Ascending aorta (tissue), 2 donors: ENCODE measurements at regions of chr13 and their contacts with region 1.

Region 1: GRCh38 chr13:22114630-22115311 is 443.9 kb downstream of the FGF9 start:
- DNase-seq: no peak
- H3K4me3 ChIP-seq: no peak overlapping the region
- H3K27ac ChIP-seq: peak overlapping the region; percentile 46 to 63
- H3K4me1 ChIP-seq: peaks cover 3 to 23% of the 10 kb centered on the region in 2 donors
- H3K27me3 ChIP-seq: no peaks in the 10 kb centered on the region
- CTCF ChIP-seq: no peak

Region 2: DNA sequence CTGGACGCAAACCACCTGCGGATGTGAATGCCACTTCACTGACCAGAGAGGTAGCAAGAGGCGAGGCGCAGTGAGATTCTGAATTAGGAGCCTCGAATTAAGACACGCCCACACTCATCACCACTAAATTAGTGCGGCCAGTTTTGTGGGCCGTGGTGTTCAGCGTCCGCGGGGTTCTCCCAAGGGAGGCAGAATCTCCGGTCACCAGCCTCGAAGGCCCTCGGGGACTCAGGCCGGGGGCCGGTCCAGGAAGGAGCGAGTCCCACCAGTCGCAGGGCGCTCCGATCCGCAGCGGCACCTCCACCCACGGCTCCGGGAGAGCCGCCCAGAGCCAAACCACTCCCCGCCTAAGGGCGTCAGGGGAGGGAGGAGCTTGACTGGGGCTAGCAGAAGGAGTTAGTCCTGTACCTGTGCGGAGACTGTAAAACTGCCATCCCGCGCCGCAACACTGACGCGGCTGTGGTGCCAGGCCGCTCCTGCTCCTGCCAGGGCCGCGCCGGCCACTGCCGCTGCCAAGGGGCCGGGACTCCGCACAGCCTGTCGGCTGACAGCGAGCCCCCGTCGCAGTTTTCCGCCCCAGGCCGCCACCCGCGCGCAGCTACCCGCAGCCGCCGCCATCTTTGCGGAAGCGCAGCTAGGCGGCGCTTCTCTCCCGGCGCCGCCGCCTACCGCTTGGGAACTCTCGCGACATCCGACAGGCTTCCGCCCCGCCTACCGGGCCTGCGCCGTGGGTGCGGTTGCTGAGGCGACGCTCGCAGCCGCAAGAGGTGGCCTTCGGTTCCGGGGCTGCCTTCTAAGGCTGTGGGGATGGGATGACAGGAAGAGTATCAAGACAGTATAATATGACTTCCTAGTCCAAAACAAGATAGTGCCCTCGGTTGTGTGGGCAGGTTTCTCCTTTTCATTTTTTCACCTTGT is 511.0 kb before region 1 on chr13 and contains the start of gene MICU2:
- intact Hi-C with region 1: loop called (anchors 10 kb)
- DNase-seq: peak; percentile 71 to 95
- H3K4me3 ChIP-seq: peak within 1 kb of the TSS; percentile 73 to 74
- H3K27ac ChIP-seq: peak within 1 kb of the TSS; percentile 79 to 94
- H3K4me1 ChIP-seq: peaks cover 0 to 5% of the 10 kb centered on the region in 2 donors
- H3K27me3 ChIP-seq: no peaks in the 10 kb centered on the region
- CTCF ChIP-seq: peak in 1 of 3 experiments; percentile 37
- total RNA-seq, gene MICU2: 41.5 TPM

Region 3: DNA sequence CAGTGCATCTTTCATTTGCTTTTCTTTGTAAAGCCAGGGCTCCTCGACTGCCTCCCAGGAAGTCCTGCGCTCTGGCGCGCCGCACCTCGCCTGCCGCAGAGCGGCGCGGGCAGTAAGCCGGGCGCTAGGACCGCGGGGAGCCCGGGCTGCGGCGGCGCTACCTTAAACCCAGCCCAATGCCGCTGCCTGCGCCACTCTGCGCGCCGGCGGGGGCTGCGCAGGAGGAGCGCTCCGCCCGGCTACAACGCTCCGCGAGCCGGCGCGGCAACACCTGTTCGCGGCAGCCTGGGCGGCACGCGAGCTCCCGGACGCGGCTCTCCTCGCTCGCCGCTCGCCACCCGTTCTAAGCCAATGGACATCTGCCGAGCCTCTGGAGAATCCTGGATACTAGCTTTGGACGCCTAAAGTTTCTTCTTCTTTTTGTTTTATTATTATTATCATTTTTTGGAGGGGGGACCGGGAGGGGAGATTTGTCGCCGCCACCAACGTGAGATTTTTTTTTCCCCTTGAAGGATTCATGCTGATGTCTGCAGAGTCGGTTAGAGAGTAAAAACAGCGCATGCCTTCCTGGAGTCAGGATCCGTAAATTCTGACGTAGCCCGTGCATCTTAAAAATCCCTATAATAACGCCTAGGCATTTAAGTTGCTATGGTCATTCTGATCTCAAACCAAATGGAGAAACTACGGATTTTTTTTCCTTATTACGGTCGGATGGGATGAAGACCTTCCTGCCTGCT is 443.7 kb before region 1 on chr13 and contains the start of gene FGF9:
- intact Hi-C with region 1: loop called (anchors 5 kb)
- DNase-seq: peak in 1 of 2 donors; percentile 84
- H3K4me3 ChIP-seq: peak within 1 kb of the TSS; percentile 67 to 83
- H3K27ac ChIP-seq: peak within 1 kb of the TSS in 1 of 2 donors; percentile 39
- H3K4me1 ChIP-seq: peaks cover 12 to 41% of the 10 kb centered on the region in 2 donors
- H3K27me3 ChIP-seq: peaks cover 5% of the 10 kb centered on the region
- CTCF ChIP-seq: no peak
- total RNA-seq, gene FGF9: not detected

Region 4: DNA sequence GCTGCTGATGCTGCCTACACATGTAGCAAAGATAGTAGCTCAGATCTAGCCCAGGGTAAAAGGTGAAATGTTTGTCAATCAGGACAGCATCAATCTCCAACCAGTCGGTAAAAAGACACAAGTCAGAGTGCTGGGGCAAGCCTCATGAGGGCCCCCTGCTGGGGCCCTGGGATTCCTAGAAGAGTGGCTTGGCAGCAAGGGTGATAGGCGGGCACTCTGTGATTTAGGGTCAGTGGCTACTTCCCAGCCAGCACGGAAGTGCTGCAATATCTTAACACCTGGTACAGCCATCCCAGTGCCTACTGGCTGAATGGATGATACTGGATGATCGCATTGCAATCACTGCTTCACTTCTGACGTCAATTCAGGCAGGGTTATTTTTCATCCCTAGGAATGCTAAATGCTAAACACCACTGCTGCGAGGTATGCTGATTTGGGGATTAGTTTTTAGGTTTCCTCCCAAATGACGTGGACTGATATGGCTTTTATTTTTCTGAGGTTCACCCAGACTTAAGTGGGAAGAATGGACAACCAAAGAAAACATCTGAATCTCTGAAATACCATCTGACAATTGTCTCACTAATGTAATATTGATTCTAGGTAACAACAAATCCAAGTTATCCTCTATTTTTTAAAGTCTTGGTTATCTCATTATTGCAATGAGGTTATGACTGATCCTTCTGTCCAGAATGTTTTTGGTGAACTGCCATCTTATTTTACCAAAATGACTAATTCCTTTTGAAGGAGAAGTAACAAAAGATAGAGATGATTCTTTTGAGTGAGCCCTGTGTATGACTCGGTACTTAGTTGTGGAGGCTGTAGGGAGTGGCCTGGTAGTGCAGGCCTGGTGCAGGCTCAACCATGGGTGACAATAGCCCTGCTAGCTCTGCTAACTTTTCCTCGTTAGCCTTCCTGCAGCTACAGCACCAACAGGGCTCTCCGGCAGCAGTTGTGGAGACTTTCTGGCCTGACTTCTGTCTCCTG is 11.4 kb before region 1 on chr13:
- intact Hi-C with region 1: no loop called
- DNase-seq: no peak
- H3K4me3 ChIP-seq: no peak overlapping the region
- H3K27ac ChIP-seq: no peak overlapping the region
- H3K4me1 ChIP-seq: peaks cover 7 to 13% of the 10 kb centered on the region in 2 donors
- H3K27me3 ChIP-seq: no peaks in the 10 kb centered on the region
- CTCF ChIP-seq: no peak

Region 5: GRCh38 chr13:22198001-22198400 is 83.2 kb after region 1 on chr13:
- intact Hi-C with region 1: loop called (anchors 2 kb)
- DNase-seq: no peak
- H3K4me3 ChIP-seq: no peak overlapping the region
- H3K27ac ChIP-seq: no peak overlapping the region
- H3K4me1 ChIP-seq: peaks cover 0 to 6% of the 10 kb centered on the region in 2 donors
- H3K27me3 ChIP-seq: no peaks in the 10 kb centered on the region
- CTCF ChIP-seq: no peak